ENCODE measurements at regions of chr15 and their contacts with region 1.

Region 1: DNA sequence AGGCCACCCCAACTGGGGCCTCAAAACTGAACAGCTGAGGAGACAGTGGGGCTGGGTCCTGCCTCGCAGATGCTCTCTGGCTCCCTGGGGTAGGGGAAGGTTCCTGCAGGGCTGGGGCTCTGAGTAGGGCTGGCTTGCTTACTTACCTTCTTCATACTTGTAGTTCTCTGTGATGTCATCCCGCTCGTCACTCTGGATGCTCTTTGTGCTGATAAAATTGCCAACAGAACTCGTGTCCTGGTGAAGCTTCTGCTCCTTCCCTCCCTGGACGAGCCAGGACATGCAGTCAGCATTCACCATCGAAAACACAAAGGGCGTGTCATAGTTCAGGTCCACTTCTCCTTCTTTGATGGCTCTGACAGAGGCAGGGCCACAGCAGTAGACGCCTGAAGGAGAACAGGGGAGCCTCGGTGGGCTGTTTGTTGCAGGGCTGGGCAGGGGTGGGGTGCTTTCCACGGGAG is 17.9 kb upstream of the EPB42 start:
- DNase-seq: no peak
- ATAC-seq: peak in 3 of 4 donors; percentile 7 to 27 (median 25)
- H3K4me3 ChIP-seq: no peak overlapping the region
- H3K27ac ChIP-seq: peak overlapping the region; percentile 80
- H3K4me1 ChIP-seq: peaks cover 9% of the 10 kb centered on the region
- H3K27me3 ChIP-seq: no peaks in the 10 kb centered on the region
- CTCF ChIP-seq: no peak

Region 2: DNA sequence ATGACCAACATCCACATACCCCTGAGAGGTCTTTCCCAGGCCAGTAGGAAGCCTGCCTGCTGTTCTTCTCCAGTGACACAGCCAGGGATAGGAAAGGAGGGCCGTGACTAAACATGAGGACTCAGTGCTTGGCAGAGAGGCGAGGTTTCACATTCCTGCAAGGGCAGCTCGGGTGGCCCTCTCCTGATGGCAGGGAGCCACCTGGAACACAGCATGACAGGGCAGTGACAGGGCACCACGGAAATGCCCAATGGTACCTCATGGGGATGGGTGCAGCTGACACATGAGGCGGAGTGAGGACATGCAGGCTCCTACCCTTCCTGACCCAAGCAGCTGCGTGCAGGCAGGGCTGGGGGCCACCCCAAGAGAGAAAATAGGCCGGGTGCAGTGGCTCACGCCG is 35.4 kb after region 1 on chr15:
- intact Hi-C with region 1: loop called in 1 of 2 experiments (anchors 1 kb)
- DNase-seq: peak; percentile 88 to 96
- ATAC-seq: peak; percentile 95 to 99 (median 98)
- H3K4me3 ChIP-seq: no peak overlapping the region
- H3K27ac ChIP-seq: peak overlapping the region; percentile 75
- H3K4me1 ChIP-seq: peaks cover 26% of the 10 kb centered on the region
- H3K27me3 ChIP-seq: no peaks in the 10 kb centered on the region
- CTCF ChIP-seq: no peak